ENCODE measurements at regions of chr12 and their contacts with region 1.

Region 1: DNA sequence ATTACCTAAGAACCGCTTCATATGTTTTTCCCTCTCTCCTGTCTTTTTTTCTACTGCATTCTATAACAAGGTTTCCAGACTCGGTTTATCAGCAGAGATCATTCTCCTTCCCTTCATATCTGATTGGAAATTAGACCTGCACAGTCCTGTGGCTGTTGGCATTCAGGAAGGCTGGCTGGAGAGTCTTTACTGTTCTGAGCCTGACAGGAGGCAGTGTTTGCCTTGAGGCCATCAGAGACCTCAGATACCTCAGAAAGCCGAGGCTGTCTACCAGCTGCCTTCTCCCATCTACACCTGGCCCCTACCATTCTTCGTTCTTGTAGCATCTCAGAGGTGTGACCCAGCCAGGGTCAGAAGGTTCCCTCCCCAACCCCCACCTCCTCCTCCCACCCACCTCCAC is 182.0 kb downstream of the CAND1 start:
- DNase-seq: no peak
- ATAC-seq: no peak
- H3K4me3 ChIP-seq: no peak overlapping the region
- H3K4me3 Mint-ChIP-seq: peak overlapping the region in 1 of 3 donors; percentile 67
- H3K27ac ChIP-seq: no peak overlapping the region
- H3K27ac Mint-ChIP-seq: peak overlapping the region; percentile 2 to 7
- H3K4me1 ChIP-seq: peaks cover 11 to 31% of the 10 kb centered on the region in 2 experiments
- H3K4me1 Mint-ChIP-seq: peaks cover 51 to 54% (median 54%) of the 10 kb centered on the region in 3 donors
- H3K27me3 ChIP-seq: no peaks in the 10 kb centered on the region
- H3K27me3 Mint-ChIP-seq: no peaks in the 10 kb centered on the region

Region 2: DNA sequence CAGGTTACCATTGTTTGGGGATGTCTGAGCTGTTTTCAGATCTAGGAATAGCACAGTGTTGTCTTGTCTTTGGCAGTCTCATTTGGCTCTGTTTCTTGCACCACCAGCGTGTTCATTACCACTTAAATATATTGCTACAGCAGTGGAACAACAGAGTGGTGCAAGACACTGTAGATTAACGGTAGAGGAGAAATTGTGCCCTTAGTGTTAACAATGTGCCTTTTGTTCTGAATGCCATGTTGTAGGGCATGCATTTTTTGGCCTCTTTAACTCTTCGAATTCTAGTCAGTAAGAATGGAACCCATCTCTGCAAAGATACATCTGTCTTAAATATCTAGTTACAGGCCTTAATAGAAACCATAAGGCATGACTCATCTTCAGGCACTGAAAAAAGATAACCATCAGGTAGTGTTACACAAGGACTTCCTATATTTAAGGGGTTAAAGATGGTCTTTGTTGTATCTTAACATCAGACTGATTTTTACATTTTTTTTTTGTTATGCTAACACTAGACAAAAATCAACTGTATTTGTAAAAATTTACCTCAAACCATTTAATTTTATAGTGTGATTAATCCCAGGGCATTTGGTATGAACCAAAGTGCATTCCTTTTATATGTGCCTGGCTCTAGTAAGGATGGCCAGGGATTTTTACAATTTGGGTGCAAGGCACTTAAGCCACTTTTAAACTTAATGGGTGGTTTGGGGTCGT is 210.3 kb after region 1 on chr12:
- CTCF ChIA-PET with region 1: no interaction called
- POLR2A ChIA-PET with region 1: interaction called in 1 of 2 experiments, 14 read pairs
- DNase-seq: no peak
- ATAC-seq: peak in 2 of 4 experiments; percentile 34 to 36
- H3K4me3 ChIP-seq: no peak overlapping the region
- H3K4me3 Mint-ChIP-seq: peak overlapping the region in 2 of 3 donors; percentile 22 to 43
- H3K27ac ChIP-seq: no peak overlapping the region
- H3K27ac Mint-ChIP-seq: peak overlapping the region; percentile 34 to 60
- H3K4me1 ChIP-seq: peaks cover 16 to 26% of the 10 kb centered on the region in 2 experiments
- H3K4me1 Mint-ChIP-seq: peaks cover 91 to 95% (median 92%) of the 10 kb centered on the region in 3 donors
- H3K27me3 ChIP-seq: no peaks in the 10 kb centered on the region
- H3K27me3 Mint-ChIP-seq: no peaks in the 10 kb centered on the region

Measured in T-cell (primary cell).